Common myeloid progenitor, CD34-positive (primary cell): ENCODE measurements at regions of chr2 and their contacts with region 1.

Region 1: GRCh38 chr2:39593439-39594393 is 72.0 kb upstream of the TMEM178A start:
- DNase-seq: peak; percentile 65 to 77 (median 77)
- H3K4me3 ChIP-seq: no peak overlapping the region
- H3K27ac ChIP-seq: no peak overlapping the region
- H3K4me1 ChIP-seq: peaks cover 0 to 2% (median 0%) of the 10 kb centered on the region in 4 experiments
- H3K27me3 ChIP-seq: no peaks in the 10 kb centered on the region

Region 2: DNA sequence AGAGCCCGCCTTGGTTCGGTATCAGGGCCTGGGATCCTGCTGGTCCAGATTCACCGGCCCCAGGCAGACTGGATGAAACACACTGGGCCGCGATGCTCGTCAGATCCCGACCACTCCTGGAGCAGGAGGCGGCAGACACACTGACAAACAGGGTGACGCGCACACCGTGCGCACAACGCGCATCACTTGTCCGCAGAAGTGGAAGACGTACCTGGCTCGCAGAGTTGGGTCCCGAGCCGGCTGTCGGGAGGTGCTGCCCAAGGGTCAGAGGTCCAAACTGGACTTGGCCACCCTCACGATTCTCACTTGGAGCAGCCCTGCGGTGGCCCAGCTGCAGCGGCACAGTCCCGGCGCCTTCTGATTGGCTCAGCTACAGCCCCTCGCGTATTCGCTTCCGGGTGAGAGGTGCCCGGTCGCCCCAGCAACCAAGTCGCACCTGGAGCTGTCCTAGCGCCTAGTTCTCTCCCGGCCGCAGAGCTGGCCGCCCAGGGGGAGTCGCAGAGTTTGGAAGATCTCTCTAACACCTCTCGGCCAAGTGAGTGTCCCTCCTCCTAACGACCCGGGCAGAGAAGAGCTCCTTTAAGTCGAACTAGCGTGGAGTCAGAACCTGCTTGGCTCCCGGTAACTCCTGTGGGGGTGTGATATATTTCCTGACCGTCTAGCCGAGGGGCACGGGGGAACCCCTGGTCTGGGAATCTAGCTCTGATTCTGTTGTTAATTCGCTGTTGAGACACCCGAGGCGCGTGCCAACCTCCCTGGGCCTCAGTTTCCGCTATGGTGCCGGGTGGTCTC is 717.9 kb before region 1 on chr2 and contains the starts of genes DHX57 and MORN2:
- CTCF ChIA-PET with region 1: no interaction called
- POLR2A ChIA-PET with region 1: no interaction called
- DNase-seq: peak; percentile 64 to 87 (median 79)
- H3K4me3 ChIP-seq: peak within 1 kb of the TSS; percentile 78 to 98 (median 89)
- H3K27ac ChIP-seq: peak within 1 kb of the TSS; percentile 40 to 75
- H3K4me1 ChIP-seq: peaks cover 11 to 17% (median 15%) of the 10 kb centered on the region in 4 experiments
- H3K27me3 ChIP-seq: no peaks in the 10 kb centered on the region

Region 3: DNA sequence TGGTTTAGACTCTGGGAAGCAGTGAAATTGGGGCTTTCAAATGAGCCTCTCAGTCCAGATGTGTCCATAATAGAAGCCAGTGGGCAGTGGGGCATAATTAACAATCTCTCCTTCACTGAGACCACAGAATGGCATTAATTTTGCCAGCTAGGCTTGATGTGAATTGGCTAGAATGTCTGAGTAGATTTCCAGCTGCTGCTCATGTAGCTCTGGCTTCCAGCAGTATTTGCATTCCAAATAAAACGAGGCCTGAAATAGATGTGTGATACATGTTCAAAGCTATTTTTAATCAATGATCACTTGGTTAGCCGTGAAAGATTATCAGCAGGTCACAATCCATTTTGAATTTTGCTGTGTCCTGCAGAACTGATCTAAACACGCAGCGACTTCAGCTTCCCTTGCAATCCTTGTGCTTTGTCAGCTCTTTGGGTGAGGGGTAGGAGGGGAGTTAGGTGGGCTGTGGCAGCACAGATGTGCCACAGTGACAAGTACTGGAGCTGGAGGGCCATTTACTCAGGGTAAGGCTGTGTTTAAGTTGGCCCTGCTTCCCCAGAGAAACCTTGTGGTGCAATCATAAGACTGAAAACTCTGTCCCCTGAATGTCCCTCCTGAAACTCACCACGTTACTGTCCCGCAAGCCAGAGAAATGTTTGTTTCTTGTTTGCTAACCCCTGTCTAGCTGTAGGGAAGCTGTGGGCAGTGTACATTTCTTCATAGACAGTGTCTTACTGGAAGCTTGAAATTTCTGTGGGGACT is 15.1 kb after region 1 on chr2:
- CTCF ChIA-PET with region 1: interaction called, 51 read pairs
- POLR2A ChIA-PET with region 1: interaction called, 3 read pairs
- DNase-seq: peak in 2 of 3 donors; percentile 20 to 26
- H3K4me3 ChIP-seq: no peak overlapping the region
- H3K27ac ChIP-seq: no peak overlapping the region
- H3K4me1 ChIP-seq: peaks cover 0 to 15% (median 0%) of the 10 kb centered on the region in 4 experiments
- H3K27me3 ChIP-seq: no peaks in the 10 kb centered on the region

Region 4: GRCh38 chr2:39620067-39620466 is 26.4 kb after region 1 on chr2:
- CTCF ChIA-PET with region 1: interaction called, 13 read pairs
- POLR2A ChIA-PET with region 1: no interaction called
- DNase-seq: peak; percentile 95 to 98 (median 98)
- H3K4me3 ChIP-seq: peak overlapping the region in 1 of 7 experiments; percentile 30
- H3K27ac ChIP-seq: peak overlapping the region in 1 of 2 experiments; percentile 32
- H3K4me1 ChIP-seq: peaks cover 11 to 26% (median 22%) of the 10 kb centered on the region in 4 experiments
- H3K27me3 ChIP-seq: no peaks in the 10 kb centered on the region

Region 5: DNA sequence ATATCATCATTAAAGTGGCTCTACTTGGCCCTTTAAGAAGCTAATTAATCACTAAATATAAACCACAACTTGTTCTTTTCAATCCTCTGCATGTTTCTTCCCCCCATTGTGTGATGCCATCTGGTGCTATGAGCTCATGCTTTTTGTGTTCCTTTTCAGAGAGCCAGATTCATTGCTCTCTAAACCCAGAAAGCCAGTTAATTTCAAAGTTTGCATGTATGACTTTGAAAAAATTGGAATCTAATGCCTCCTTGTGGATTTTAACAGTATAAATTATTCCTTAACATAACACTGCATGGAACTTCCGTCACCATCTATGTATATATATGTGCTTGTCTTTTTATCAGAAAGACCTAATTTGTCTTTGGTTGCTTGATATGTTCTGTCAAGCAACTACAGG is 103.1 kb after region 1 on chr2:
- CTCF ChIA-PET with region 1: interaction called, 115 read pairs
- POLR2A ChIA-PET with region 1: no interaction called
- DNase-seq: peak; percentile 22 to 52 (median 46)
- H3K4me3 ChIP-seq: no peak overlapping the region
- H3K27ac ChIP-seq: no peak overlapping the region
- H3K4me1 ChIP-seq: no peaks in the 10 kb centered on the region
- H3K27me3 ChIP-seq: peaks cover 0 to 2% (median 0%) of the 10 kb centered on the region in 5 experiments